HepG2 (cell line): ENCODE measurements at regions of chr4 and their contacts with region 1.

Region 1: GRCh38 chr4:165364452-165365080 is 14.2 kb upstream of the CPE start:
- DNase-seq: peak; percentile 31
- ATAC-seq: peak; percentile 5; the same call in 1 of the 3 replicates
- H3K4me3 ChIP-seq: no peak overlapping the region
- H3K27ac ChIP-seq: no peak overlapping the region
- H3K4me1 ChIP-seq: peaks cover 59% of the 10 kb centered on the region
- H3K27me3 ChIP-seq: no peaks in the 10 kb centered on the region
- CTCF ChIP-seq: no peak
- EP300 ChIP-seq: no peak
- POLR2A ChIP-seq: no peak
- RAD21 ChIP-seq: no peak

Region 2: DNA sequence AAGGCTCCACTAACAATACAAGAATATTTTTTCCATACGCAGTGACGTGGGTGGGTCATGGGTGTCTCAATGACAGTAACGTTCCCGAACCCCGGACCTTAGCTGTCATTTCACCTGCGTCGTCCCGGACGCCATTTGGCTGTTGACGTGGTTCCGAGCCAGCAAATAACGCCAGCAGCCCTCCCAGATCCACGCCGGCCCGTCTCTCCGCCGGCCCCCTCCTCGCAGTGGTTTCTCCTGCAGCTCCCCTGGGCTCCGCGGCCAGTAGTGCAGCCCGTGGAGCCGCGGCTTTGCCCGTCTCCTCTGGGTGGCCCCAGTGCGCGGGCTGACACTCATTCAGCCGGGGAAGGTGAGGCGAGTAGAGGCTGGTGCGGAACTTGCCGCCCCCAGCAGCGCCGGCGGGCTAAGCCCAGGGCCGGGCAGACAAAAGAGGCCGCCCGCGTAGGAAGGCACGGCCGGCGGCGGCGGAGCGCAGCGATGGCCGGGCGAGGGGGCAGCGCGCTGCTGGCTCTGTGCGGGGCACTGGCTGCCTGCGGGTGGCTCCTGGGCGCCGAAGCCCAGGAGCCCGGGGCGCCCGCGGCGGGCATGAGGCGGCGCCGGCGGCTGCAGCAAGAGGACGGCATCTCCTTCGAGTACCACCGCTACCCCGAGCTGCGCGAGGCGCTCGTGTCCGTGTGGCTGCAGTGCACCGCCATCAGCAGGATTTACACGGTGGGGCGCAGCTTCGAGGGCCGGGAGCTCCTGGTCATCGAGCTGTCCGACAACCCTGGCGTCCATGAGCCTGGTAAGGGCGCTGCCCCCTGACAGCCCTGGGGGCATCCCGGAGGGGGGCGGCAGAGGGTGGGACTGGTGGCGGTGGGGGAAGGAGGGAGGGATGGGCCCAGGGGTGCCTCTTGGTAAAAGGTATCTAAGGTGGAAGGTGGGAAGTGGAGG is 14.4 kb after region 1 on chr4 and contains the start of gene CPE:
- CTCF ChIA-PET with region 1: no interaction called
- POLR2A ChIA-PET with region 1: interaction called, 43 read pairs
- in situ Hi-C with region 1: no loop called
- intact Hi-C with region 1: loop called (anchors 1 kb)
- DNase-seq: peak; percentile 81
- ATAC-seq: peak; percentile 99
- H3K4me3 ChIP-seq: peak within 1 kb of the TSS; percentile 79 to 91 (median 85)
- H3K27ac ChIP-seq: peak within 1 kb of the TSS; percentile 59
- H3K4me1 ChIP-seq: peaks cover 49% of the 10 kb centered on the region
- H3K27me3 ChIP-seq: no peaks in the 10 kb centered on the region; a peak in 1 of 5 replicates
- CTCF ChIP-seq: peak; percentile 84
- EP300 ChIP-seq: no peak
- POLR2A ChIP-seq: peak; percentile 94 to 95
- RAD21 ChIP-seq: peak; percentile 87
- total RNA-seq, gene CPE: 94.9 and 268 TPM in 2 replicates